Psoas muscle (tissue), 8 donors: ENCODE measurements at regions of chr5 and their contacts with region 1.

Region 1: GRCh38 chr5:112283943-112284929 is 134.8 kb downstream of the EPB41L4A start:
- DNase-seq: no peak
- ATAC-seq: no peak
- H3K4me3 ChIP-seq: no peak overlapping the region
- H3K27ac ChIP-seq: no peak overlapping the region
- H3K4me1 ChIP-seq: no peaks in the 10 kb centered on the region
- H3K27me3 ChIP-seq: no peaks in the 10 kb centered on the region
- CTCF ChIP-seq: no peak

Region 2: GRCh38 chr5:112210430-112211005 is 73.7 kb before region 1 on chr5:
- intact Hi-C with region 1: loop called in 1 of 2 experiments (anchors 2 kb)
- DNase-seq: peak in 1 of 2 donors; percentile 50
- ATAC-seq: peak; percentile 51 to 84 (median 63)
- H3K4me3 ChIP-seq: no peak overlapping the region
- H3K27ac ChIP-seq: no peak overlapping the region
- H3K4me1 ChIP-seq: no peaks in the 10 kb centered on the region
- H3K27me3 ChIP-seq: no peaks in the 10 kb centered on the region
- CTCF ChIP-seq: peak; percentile 67

Region 3: DNA sequence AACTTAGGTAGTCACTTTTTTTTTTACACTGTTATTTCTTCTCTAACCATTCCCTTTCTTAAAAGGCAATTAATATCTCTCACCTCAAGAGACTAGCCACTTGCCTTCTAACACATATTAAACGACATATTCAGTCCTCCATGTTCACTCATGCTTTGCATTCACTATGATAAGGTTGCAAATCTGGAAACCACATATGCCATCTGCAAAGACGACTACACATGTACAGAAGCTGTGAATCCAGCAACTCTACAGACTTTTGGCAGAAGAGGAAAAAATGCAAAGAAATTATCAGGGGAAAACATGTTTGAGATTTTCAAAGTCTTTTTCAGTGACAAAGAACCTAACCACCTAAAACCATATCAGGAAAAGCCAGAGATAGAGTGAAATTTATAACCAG is 22.7 kb after region 1 on chr5:
- intact Hi-C with region 1: no loop called
- DNase-seq: no peak
- ATAC-seq: no peak
- H3K4me3 ChIP-seq: no peak overlapping the region
- H3K27ac ChIP-seq: no peak overlapping the region
- H3K4me1 ChIP-seq: peaks cover 14% of the 10 kb centered on the region
- H3K27me3 ChIP-seq: no peaks in the 10 kb centered on the region
- CTCF ChIP-seq: no peak